GM10248 (cell line): ENCODE measurements at regions of chr3 and their contacts with region 1.

Region 1: GRCh38 chr3:112136959-112137693 is 4.1 kb upstream of the GCSAM start:
- DNase-seq: no peak
- CTCF ChIP-seq: peak; percentile 72

Region 2: DNA sequence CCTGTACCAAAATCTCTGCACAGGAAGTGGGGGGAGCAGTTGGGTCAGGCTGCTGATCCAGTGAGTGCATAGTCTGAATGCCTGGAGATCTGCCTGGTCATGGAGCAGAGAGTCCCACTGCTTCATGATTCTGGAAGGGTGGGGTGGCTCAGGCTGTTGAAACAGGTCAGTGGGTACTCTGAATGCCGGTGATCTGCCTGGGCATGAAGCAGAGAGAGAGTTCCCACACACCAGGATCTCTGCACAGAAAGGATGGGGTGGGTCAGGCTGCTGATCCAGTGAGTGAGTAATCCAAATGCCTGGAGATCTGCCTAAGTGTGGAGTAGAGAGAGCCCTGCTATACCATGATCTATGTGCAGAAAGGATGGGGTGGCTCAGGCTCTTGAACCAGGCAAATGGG is 12.0 kb after region 1 on chr3:
- CTCF ChIA-PET with region 1: interaction called, 16 read pairs
- POLR2A ChIA-PET with region 1: no interaction called
- DNase-seq: no peak
- CTCF ChIP-seq: no peak

Region 3: GRCh38 chr3:112303764-112304325 is 166.7 kb after region 1 on chr3:
- CTCF ChIA-PET with region 1: interaction called, 13 read pairs
- POLR2A ChIA-PET with region 1: no interaction called
- DNase-seq: no peak
- CTCF ChIP-seq: no peak

Region 4: GRCh38 chr3:112333002-112333380 is 195.9 kb after region 1 on chr3 and contains the start of gene CD200:
- CTCF ChIA-PET with region 1: interaction called, 20 read pairs
- POLR2A ChIA-PET with region 1: no interaction called
- DNase-seq: peak; percentile 55
- CTCF ChIP-seq: no peak

Region 5: DNA sequence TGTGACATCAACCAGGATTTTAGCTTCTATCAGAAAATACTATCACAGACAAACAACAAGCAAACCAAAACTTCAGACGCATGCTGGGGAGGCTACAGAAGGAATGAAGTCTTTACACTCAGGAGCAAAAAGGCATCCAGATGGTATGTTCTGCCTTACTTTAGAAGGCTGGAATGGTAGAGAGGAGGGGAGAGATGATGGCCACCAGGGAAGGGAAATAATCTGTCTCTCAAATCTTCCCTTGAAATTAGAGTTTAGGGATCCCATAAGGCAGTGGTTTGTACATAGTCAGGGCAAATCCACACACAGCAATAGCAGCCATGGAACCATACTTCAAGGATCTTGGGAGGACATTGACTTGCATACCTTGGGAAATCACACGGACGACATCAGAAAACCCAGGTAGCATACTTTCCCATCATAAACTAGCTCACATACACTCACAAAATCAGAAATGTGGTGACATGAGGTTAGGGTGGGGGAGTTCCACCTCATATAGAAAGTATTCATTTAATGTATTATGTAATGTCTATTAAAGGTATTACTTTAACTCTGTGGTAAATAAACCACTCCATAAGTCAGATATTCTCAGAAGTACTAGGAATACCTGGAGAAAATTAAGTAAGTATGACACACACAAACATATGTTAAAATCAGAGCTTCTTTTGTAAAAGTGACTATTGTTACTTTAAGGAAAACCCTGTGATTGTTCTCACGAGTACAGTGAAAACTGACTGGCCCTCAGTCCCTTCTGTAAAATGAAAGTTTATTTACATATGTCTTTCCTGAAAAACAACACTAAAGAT is 352.8 kb after region 1 on chr3:
- CTCF ChIA-PET with region 1: interaction called, 17 read pairs
- POLR2A ChIA-PET with region 1: no interaction called
- DNase-seq: no peak
- CTCF ChIP-seq: no peak